ENCODE measurements at regions of chr3 and their contacts with region 1.

Region 1: GRCh38 chr3:187745201-187746058 is at the start of gene BCL6:
- DNase-seq: peak; percentile 91 to 92
- ATAC-seq: peak; percentile 70
- total RNA-seq, gene BCL6: 12.6 to 16.5 TPM

Region 2: GRCh38 chr3:187889601-187890404 is 144.4 kb after region 1 on chr3:
- intact Hi-C with region 1: no loop called
- DNase-seq: no peak
- ATAC-seq: peak; percentile 44

Region 3: GRCh38 chr3:188052169-188053030 is 307.0 kb after region 1 on chr3:
- intact Hi-C with region 1: loop called in 1 of 2 experiments (anchors 10 kb)
- DNase-seq: peak; percentile 57 to 91
- ATAC-seq: peak; percentile 85

Region 4: GRCh38 chr3:188154014-188154808 is 408.8 kb after region 1 on chr3 and contains the start of gene LPP:
- intact Hi-C with region 1: loop called in 1 of 2 experiments (anchors 10 kb)
- DNase-seq: peak; percentile 78 to 82
- ATAC-seq: peak; percentile 74
- total RNA-seq, gene LPP: 228 to 258 TPM

Region 5: DNA sequence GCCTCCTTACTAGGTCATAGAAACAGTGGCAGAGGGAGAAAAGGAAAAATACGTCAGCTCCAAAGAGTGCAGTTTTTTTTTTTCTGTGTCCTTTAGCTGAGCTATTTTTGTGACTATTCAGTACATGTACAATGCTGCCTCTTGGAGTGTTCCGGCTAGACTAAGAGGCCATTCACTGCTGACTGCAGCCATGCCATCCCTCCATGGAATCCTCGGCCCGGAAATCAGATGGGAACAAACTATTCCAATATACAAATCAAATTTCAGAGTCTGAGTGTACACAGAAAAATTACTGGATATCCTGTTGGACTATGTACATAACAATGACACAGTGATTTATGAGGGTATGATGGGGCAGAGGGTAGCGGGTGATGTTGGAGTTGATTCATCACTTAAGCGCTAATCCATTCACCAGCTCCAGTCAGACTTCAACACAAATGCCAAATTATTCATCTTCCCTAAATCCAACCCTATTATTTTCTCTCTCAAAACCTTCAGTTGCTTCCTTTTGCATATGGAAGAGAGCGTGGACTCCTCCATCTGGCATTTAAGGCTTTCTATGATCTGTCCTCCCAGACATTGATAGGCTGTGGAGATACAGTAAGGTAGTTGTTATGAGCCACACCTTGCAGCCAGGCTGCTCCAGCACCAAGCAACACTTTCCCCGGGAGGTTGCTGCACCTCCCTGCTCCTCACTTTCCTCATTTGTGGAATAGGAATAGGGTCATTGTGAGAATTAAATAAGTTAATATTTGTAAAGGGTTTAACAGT is 517.7 kb after region 1 on chr3:
- intact Hi-C with region 1: loop called in 1 of 2 experiments (anchors 10 kb)
- DNase-seq: peak in 1 of 2 donors; percentile 49
- ATAC-seq: peak; percentile 69

Region 6: GRCh38 chr3:188578576-188579363 is 833.3 kb after region 1 on chr3:
- intact Hi-C with region 1: loop called in 1 of 2 experiments (anchors 10 kb)
- DNase-seq: peak in 1 of 2 donors; percentile 36
- ATAC-seq: no peak

Region 7: DNA sequence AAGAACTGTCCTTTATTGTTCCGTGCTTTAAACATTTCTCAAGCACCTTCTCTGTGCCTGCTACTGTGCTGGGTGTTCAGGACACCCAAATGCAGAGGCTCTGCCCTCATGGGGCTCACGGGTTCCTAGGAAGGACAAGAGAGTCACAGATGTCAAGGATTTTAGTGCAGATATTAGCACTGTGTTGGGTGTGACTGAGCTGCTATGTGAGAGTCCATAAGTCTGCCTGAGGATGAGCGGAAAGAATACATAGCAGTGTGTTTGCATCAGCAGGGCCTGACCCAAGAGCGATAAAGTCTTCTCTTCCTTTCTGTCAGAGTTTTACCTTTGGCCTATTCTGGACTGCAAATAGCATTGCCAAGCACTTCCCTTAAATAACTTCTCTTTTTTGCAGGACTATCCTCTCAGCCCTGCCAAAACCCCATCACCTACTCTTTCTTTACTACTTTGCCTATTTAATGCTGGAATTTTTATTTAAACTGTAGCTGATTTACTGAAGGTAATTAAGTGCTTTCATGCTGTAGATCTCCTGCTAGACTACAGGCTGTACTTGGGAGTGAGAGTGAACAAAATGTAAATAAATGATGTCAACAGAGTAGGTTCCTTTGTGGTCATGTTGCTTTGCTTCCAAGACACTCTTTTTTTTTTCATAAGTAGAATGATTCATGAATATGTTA is 967.0 kb after region 1 on chr3:
- intact Hi-C with region 1: loop called in 1 of 2 experiments (anchors 10 kb)
- DNase-seq: no peak
- ATAC-seq: peak; percentile 92